IMR-90 (cell line): ENCODE measurements at regions of chr5 and their contacts with region 1.

Region 1: GRCh38 chr5:174311531-174312269 is 266.2 kb downstream of the NSG2 start:
- DNase-seq: peak; percentile 34
- ATAC-seq: peak; percentile 97
- H3K4me3 ChIP-seq: peak overlapping the region; percentile 40
- H3K27ac ChIP-seq: no peak overlapping the region
- H3K4me1 ChIP-seq: peaks cover 2% of the 10 kb centered on the region; the same call in 1 of the 2 replicates
- H3K27me3 ChIP-seq: peaks cover 10% of the 10 kb centered on the region; the same call in 1 of the 2 replicates
- CTCF ChIP-seq: peak; percentile 73
- POLR2A ChIP-seq: no peak
- RAD21 ChIP-seq: peak; percentile 53

Region 2: GRCh38 chr5:173163219-173163618 is 1148.5 kb before region 1 on chr5:
- CTCF ChIA-PET with region 1: interaction called, 3 read pairs
- POLR2A ChIA-PET with region 1: no interaction called
- dilution Hi-C with region 1: no loop called
- in situ Hi-C with region 1: loop called (anchors 25 kb)
- intact Hi-C with region 1: no loop called
- DNase-seq: peak; percentile 55
- ATAC-seq: no peak
- H3K4me3 ChIP-seq: no peak overlapping the region
- H3K27ac ChIP-seq: no peak overlapping the region
- H3K4me1 ChIP-seq: peaks cover 2% of the 10 kb centered on the region; the same call in 1 of the 2 replicates
- H3K27me3 ChIP-seq: no peaks in the 10 kb centered on the region
- CTCF ChIP-seq: no peak
- POLR2A ChIP-seq: no peak
- RAD21 ChIP-seq: no peak

Region 3: DNA sequence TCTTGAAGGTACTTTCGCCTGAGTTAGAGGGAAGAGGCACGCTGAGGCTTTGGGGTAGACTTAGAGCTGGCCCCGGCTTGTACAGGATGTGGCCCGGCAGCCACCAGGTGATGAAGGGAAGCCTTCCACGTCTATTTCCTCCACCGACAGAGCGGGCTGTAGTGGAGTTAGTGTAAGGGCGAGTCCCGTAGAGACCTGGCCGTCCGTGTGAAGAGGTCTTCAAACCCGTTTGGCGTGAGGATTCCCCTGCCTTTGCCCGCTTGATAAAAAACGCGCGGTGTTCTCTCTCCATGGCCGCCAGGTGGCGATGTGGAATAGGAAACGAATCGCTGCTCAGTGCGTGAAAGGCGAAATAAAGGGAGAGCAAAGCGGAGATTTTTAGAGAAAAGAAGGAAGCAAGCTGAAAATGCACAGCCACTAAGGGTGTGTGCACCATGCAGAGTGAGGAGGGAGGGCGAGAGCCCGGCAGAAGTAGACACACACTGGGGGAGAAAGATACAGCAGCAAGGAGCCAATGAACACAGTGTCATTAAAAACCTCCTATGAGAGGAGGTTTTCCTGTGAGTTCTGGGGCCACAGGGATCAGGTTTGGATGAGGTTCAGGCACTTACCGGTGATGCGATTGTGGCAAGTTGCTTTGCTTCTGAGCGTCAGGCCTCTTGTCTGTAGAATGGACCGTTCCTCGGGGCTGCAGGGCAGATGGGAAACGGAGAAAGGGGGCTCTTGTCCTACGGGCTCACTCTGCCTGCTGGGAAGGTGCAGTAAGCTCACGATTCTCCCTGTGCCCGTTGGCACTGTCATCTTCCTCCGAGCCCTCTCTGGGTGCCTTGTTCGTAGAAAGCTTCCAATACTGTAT is 1017.7 kb before region 1 on chr5:
- CTCF ChIA-PET with region 1: no interaction called
- POLR2A ChIA-PET with region 1: no interaction called
- dilution Hi-C with region 1: no loop called
- in situ Hi-C with region 1: loop called (anchors 25 kb)
- intact Hi-C with region 1: loop called (anchors 2 kb)
- DNase-seq: peak; percentile 80
- ATAC-seq: peak; percentile 84
- H3K4me3 ChIP-seq: no peak overlapping the region
- H3K27ac ChIP-seq: peak overlapping the region; percentile 29
- H3K4me1 ChIP-seq: peaks cover 17% of the 10 kb centered on the region
- H3K27me3 ChIP-seq: no peaks in the 10 kb centered on the region; the same call in 1 of the 2 replicates
- CTCF ChIP-seq: peak; percentile 96
- POLR2A ChIP-seq: peak; percentile 55; the same call in 1 of the 2 replicates
- RAD21 ChIP-seq: peak; percentile 96

Region 4: GRCh38 chr5:173917788-173918786 is 393.6 kb before region 1 on chr5:
- CTCF ChIA-PET with region 1: no interaction called
- POLR2A ChIA-PET with region 1: no interaction called
- dilution Hi-C with region 1: no loop called
- in situ Hi-C with region 1: no loop called
- intact Hi-C with region 1: loop called (anchors 10 kb)
- DNase-seq: peak; percentile 89
- ATAC-seq: peak; percentile 96
- H3K4me3 ChIP-seq: peak overlapping the region; percentile 60
- H3K27ac ChIP-seq: peak overlapping the region; percentile 72
- H3K4me1 ChIP-seq: peaks cover 2% of the 10 kb centered on the region; the same call in 1 of the 2 replicates
- H3K27me3 ChIP-seq: no peaks in the 10 kb centered on the region
- CTCF ChIP-seq: no peak
- POLR2A ChIP-seq: peak; percentile 79
- RAD21 ChIP-seq: no peak

Region 5: DNA sequence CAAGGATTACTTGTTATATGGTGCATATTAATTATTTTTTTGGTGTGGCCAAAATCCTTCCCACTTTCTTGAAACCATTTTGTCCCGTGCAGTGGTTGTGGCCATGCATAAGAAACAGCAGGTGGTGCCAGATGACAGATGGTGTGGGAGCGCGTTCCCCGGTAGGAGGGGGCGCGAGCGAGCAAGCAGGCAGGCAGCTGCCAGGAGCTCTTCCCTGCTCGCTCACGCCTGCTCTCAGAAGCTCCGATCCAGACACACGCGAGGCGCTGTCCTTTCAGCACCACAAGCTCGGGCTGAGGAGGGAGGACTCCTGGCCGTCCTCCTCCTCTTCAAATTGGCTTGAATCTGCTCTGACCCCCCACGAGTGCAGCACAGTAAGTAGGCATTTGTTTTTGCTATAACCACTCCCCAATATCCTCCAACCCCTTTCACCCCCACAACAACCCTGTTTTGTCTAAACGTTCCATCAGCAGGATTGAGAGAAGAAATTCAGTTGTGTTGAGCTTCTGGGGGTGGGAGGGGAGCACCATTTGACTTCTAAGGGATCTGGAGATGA is 266.2 kb before region 1 on chr5 and contains the start of gene NSG2:
- CTCF ChIA-PET with region 1: interaction called, 6 read pairs
- POLR2A ChIA-PET with region 1: no interaction called
- dilution Hi-C with region 1: no loop called
- in situ Hi-C with region 1: no loop called
- intact Hi-C with region 1: loop called (anchors 1 kb)
- DNase-seq: peak; percentile 75
- ATAC-seq: peak; percentile 100
- H3K4me3 ChIP-seq: no peak within 1 kb of the TSS
- H3K27ac ChIP-seq: no peak within 1 kb of the TSS
- H3K4me1 ChIP-seq: no peaks in the 10 kb centered on the region
- H3K27me3 ChIP-seq: no peaks in the 10 kb centered on the region
- CTCF ChIP-seq: peak; percentile 44
- POLR2A ChIP-seq: no peak
- RAD21 ChIP-seq: peak; percentile 44
- total RNA-seq, gene NSG2: not detected in 2 replicates